ENCODE measurements at regions of chr4 and their contacts with region 1.

Region 1: GRCh38 chr4:182925298-182925738 is 8.1 kb upstream of the DCTD start:
- DNase-seq: peak; percentile 89
- ATAC-seq: peak; percentile 97
- H3K4me3 ChIP-seq: no peak overlapping the region
- H3K27ac ChIP-seq: no peak overlapping the region
- H3K4me1 ChIP-seq: peaks cover 22% of the 10 kb centered on the region
- H3K27me3 ChIP-seq: peaks cover 0 to 3% of the 10 kb centered on the region in 2 experiments; a peak in 1 of 5 replicates
- CTCF ChIP-seq: peak; percentile 97
- EP300 ChIP-seq: no peak
- POLR2A ChIP-seq: no peak
- RAD21 ChIP-seq: peak; percentile 89

Region 2: GRCh38 chr4:182478475-182478874 is 446.8 kb before region 1 on chr4:
- CTCF ChIA-PET with region 1: interaction called, 4 read pairs
- POLR2A ChIA-PET with region 1: no interaction called
- in situ Hi-C with region 1: no loop called
- intact Hi-C with region 1: loop called (anchors 2 kb)
- DNase-seq: peak; percentile 29
- ATAC-seq: peak; percentile 64
- H3K4me3 ChIP-seq: no peak overlapping the region
- H3K27ac ChIP-seq: no peak overlapping the region
- H3K4me1 ChIP-seq: no peaks in the 10 kb centered on the region
- H3K27me3 ChIP-seq: no peaks in the 10 kb centered on the region
- CTCF ChIP-seq: peak; percentile 38; the same call in 1 of the 2 replicates
- EP300 ChIP-seq: no peak
- POLR2A ChIP-seq: no peak
- RAD21 ChIP-seq: no peak

Region 3: GRCh38 chr4:182806259-182807252 is 118.8 kb before region 1 on chr4:
- CTCF ChIA-PET with region 1: interaction called, 8 read pairs
- POLR2A ChIA-PET with region 1: no interaction called
- in situ Hi-C with region 1: loop called (anchors 5 kb)
- intact Hi-C with region 1: loop called (anchors 1 kb)
- DNase-seq: peak; percentile 35
- ATAC-seq: peak; percentile 96
- H3K4me3 ChIP-seq: peak overlapping the region in 2 of 3 experiments; percentile 36 to 56; a peak in 4 of 6 replicates
- H3K27ac ChIP-seq: no peak overlapping the region
- H3K4me1 ChIP-seq: no peaks in the 10 kb centered on the region
- H3K27me3 ChIP-seq: 0 out of 5 replicates have a peak, but pooled peaks cover 0 to 2% of the 10 kb centered on the region in 2 experiments
- CTCF ChIP-seq: peak; percentile 97
- EP300 ChIP-seq: no peak
- POLR2A ChIP-seq: no peak
- RAD21 ChIP-seq: peak; percentile 87

Region 4: DNA sequence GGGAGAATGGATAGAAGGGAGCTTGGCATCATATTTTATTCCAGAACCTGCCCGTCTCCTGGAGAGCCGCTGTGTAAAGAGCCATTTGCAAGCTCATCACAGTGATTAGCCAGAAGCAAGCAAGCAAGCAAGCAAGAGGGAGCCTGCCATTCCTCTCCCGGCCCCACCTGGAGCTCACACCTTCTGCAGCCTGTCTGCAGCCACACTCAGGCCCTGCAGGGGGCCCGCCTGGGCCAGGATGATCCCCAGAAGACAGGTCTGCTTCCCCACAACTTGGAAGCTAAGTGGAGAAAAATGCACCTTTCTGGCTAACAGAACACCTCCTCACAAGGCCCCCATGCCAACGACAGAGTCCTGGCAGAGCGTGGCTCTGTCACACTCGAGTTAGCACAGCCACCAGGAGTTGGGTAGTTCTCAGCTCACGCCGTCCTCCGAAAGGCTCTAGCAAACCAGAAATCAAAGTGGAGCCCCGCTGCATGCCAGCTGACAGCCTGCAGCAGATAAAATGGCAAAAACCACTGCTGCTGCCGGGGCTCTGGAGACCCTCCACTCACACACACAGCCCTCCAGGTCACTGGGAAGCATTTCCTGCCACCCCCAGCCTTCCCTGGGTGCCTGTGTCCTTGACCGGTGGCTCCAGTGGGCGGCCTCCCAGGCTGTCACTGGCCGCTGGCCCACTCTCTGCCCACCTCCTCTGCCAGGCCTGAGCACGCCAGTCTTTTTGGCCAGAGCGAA is 63.0 kb before region 1 on chr4:
- CTCF ChIA-PET with region 1: interaction called, 17 read pairs
- POLR2A ChIA-PET with region 1: no interaction called
- in situ Hi-C with region 1: no loop called
- intact Hi-C with region 1: loop called (anchors 2 kb)
- DNase-seq: peak; percentile 35
- ATAC-seq: peak; percentile 98
- H3K4me3 ChIP-seq: no peak overlapping the region; a peak in 1 of 6 replicates
- H3K27ac ChIP-seq: no peak overlapping the region
- H3K4me1 ChIP-seq: peaks cover 19% of the 10 kb centered on the region
- H3K27me3 ChIP-seq: no peaks in the 10 kb centered on the region
- CTCF ChIP-seq: peak; percentile 68
- EP300 ChIP-seq: no peak
- POLR2A ChIP-seq: no peak
- RAD21 ChIP-seq: peak; percentile 63

Region 5: DNA sequence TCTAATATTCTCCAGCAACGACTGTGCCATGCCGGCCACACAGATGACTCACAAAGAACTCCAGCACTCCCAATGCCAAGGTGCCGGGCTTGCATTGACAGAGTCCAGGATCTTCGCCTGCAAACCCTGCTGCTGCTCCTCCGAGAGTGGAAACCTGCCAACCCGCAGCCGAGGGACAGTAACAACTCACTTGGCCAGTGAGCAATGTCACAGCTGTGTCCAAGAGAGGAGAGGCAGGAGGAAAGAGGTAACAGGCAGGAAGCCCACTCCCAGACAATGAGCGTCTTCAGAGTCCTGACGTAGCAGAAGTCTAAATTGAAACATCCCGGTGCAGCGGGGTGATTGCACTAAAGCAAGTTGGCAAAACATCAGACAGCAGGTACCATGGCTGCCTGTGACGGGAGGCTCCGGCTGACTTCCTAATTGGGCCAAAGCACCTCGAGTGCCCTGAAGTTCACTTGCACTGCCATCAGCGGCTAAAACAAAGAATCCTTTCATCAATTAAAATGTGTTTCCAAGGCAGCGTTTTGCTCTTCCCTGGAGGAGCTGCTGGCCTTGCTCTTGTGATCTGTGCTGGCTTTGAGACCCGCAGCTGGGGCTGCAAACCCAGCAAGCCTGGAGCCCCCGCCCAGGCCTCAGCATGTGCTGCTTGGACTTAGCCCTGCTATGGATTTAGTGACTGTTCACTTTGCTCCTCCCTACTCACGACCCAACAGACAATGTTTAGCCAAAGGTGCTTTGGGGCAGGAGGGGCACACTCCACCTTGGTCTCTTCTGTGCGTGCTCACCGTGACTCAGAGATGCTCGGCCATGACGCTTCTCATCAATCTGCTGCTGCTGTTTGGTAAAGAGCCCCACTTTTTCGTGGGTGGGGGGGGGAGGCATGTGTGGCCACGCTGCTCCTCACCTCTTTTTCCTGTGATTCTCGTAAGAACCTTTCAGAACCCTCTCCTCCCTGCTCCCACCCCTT is 44.6 kb before region 1 on chr4:
- CTCF ChIA-PET with region 1: no interaction called
- POLR2A ChIA-PET with region 1: no interaction called
- in situ Hi-C with region 1: no loop called
- intact Hi-C with region 1: loop called (anchors 1 kb)
- DNase-seq: peak; percentile 89
- ATAC-seq: peak; percentile 90
- H3K4me3 ChIP-seq: peak overlapping the region; percentile 20 to 58 (median 24); a peak in 5 of 6 replicates
- H3K27ac ChIP-seq: peak overlapping the region; percentile 84
- H3K4me1 ChIP-seq: peaks cover 59% of the 10 kb centered on the region
- H3K27me3 ChIP-seq: no peaks in the 10 kb centered on the region
- CTCF ChIP-seq: no peak; the same call in 1 of the 2 replicates
- EP300 ChIP-seq: peak in 1 of 2 experiments; percentile 69; a peak in 2 of 4 replicates
- POLR2A ChIP-seq: peak; percentile 77 to 78
- RAD21 ChIP-seq: peak; percentile 57; the same call in 1 of the 2 replicates

Region 6: DNA sequence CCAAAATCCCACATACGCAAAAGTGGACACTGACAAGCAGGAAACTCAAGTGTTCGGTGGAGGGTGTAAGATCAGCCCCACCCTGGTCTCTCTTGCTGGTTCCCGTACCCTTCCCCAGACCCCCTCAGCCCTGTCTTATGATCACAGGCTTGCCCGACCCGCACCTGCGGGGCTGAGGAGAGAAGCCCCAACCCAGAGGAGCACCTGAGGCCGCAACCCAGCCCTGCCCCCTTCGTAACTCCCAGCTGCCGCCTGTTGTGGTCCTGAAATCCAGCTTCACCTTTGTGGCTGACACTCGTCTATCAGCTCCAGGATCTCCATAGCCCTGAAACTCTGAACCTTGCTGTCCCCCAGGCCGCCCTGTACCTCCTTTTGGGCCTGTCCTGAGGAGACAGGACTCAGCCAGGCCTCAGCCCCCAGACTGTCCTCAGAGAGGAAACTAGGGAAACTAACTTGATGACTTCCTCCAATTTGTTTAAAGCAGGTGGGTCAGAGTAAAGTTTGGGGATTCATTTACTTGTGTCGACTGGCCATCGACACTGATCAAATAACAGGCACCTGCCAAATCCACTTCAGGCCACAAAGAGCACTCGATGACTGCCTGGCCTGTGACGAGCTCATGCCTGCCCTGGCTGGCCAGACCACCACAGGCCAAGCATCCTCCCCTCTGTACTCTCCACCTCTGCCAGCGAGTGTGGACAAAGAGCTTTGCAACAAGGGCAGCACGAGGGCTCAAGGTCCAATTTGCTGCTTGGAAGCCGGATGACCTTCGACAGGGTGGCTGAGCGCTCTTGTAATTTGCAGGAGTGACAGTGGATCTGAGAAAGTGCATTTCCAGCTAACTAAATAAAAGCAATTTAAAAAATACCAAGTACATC is 27.5 kb before region 1 on chr4:
- CTCF ChIA-PET with region 1: no interaction called
- POLR2A ChIA-PET with region 1: interaction called, 15 read pairs
- in situ Hi-C with region 1: no loop called
- intact Hi-C with region 1: no loop called
- DNase-seq: peak; percentile 94
- ATAC-seq: peak; percentile 95
- H3K4me3 ChIP-seq: peak overlapping the region in 2 of 3 experiments; percentile 15 to 35; a peak in 3 of 6 replicates
- H3K27ac ChIP-seq: peak overlapping the region; percentile 93
- H3K4me1 ChIP-seq: peaks cover 67% of the 10 kb centered on the region
- H3K27me3 ChIP-seq: no peaks in the 10 kb centered on the region
- CTCF ChIP-seq: peak; percentile 38
- EP300 ChIP-seq: peak; percentile 38 to 76; a peak in 2 of 4 replicates
- POLR2A ChIP-seq: peak; percentile 64 to 79
- RAD21 ChIP-seq: peak; percentile 19; the same call in 1 of the 2 replicates

Region 7: DNA sequence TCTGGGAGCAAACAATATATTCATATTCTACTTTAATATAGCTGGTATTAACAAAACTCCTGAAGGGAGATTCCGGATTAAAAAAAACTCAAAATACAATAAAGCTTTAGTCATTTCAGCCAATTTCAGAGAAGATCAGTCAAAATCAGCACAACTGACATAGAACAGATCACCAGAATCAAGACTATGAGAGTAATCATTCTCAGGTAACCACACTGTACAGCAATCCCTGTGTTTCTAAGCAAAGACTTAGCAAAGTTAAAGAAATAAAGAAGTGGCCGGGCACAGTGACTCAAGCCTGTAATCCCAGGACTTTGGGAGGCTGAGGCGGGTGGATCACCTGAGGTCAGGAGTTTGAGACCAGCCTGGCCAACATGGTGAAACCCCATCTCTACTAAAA is 17.2 kb before region 1 on chr4:
- CTCF ChIA-PET with region 1: no interaction called
- POLR2A ChIA-PET with region 1: no interaction called
- in situ Hi-C with region 1: no loop called
- intact Hi-C with region 1: no loop called
- DNase-seq: no peak
- ATAC-seq: no peak
- H3K4me3 ChIP-seq: no peak overlapping the region
- H3K27ac ChIP-seq: no peak overlapping the region
- H3K4me1 ChIP-seq: peaks cover 25% of the 10 kb centered on the region
- H3K27me3 ChIP-seq: no peaks in the 10 kb centered on the region
- CTCF ChIP-seq: no peak
- EP300 ChIP-seq: no peak
- POLR2A ChIP-seq: no peak
- RAD21 ChIP-seq: no peak